B cell (primary cell): ENCODE measurements at regions of chr1 and their contacts with region 1.

Region 1: DNA sequence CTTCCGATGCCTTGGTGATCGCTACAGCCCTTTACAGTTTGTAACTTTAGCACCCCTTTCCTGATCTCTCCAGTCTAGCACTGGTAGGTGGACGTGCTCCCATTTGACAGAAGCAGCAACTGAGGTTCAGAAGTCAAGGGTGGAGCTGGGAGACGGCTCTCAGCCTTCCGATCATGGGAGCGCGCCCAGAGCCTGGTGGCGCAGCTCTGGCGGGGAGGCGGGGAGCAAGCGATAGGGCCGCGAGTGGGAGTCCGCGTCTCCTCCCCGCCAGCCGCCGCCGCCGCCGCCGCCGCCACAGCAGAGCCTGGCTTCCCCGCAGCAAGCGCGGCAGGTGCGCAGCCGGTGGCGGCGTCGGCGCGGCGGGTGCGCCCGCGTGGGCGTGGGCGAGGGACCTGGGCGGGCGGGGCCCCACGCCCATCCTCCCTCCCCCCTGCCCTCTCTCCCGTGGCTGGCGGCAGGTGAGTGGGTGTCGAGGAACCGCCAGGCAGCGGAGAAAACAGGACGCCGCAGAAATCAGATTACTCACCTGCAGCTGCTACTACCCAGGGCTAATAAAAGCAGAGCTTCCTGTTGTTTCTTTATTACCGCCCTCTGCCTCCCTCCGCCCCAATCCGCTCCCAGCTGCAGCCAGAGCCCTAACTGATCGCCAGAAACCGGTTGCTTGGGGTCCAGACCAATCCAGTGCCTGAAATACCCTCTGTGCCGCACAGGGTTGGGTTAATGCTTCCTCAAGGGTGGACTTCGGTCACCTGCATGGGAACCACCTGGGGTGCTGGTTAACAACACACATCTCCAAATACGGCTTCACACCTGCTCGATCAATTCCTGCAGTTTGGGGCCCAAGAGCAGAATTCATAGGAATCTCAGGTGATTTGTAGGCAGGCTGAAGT is 60.2 kb upstream of the ID3 start:
- DNase-seq: peak; percentile 89
- ATAC-seq: peak; percentile 88
- H3K4me3 ChIP-seq: peak overlapping the region in 4 of 5 experiments; percentile 29 to 59 (median 50)
- H3K4me3 Mint-ChIP-seq: peak overlapping the region; percentile 82
- H3K27ac ChIP-seq: peak overlapping the region; percentile 93 to 94
- H3K27ac Mint-ChIP-seq: peak overlapping the region; percentile 98
- H3K4me1 ChIP-seq: peaks cover 77 to 93% of the 10 kb centered on the region in 2 donors
- H3K4me1 Mint-ChIP-seq: peaks cover 87% of the 10 kb centered on the region
- H3K27me3 ChIP-seq: no peaks in the 10 kb centered on the region
- H3K27me3 Mint-ChIP-seq: no peaks in the 10 kb centered on the region
- CTCF ChIP-seq: no peak

Region 2: DNA sequence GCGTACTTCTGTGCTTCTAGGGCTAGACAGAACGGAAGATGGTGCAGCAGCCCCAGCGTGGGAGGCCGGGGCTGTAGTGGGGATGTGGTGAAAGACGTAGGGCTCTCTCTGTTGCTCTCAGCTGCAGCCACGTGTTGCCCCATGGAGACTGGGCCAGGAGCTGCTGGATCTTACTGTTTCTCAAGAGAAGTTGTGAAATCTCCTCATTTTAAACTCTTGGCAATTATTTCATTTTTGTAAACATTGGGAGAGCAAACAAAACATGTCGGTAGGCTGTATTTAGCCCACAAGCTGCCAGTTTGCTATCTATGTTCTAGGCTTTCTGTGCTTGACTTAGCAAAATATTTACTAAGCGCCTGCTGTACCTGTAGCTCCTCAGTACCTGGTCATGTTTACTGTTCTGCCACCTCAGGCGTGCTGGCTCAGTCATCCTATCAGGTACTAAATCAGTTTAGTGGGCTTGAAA is 107.9 kb after region 1 on chr1:
- CTCF ChIA-PET with region 1: no interaction called
- POLR2A ChIA-PET with region 1: interaction called, 6 read pairs
- intact Hi-C with region 1: loop called (anchors 10 kb)
- DNase-seq: no peak
- ATAC-seq: no peak
- H3K4me3 ChIP-seq: peak overlapping the region in 1 of 5 experiments; percentile 0
- H3K4me3 Mint-ChIP-seq: peak overlapping the region; percentile 70
- H3K27ac ChIP-seq: peak overlapping the region; percentile 82 to 87
- H3K27ac Mint-ChIP-seq: peak overlapping the region; percentile 95
- H3K4me1 ChIP-seq: peaks cover 50 to 66% of the 10 kb centered on the region in 2 donors
- H3K4me1 Mint-ChIP-seq: peaks cover 56% of the 10 kb centered on the region
- H3K27me3 ChIP-seq: no peaks in the 10 kb centered on the region
- H3K27me3 Mint-ChIP-seq: no peaks in the 10 kb centered on the region
- CTCF ChIP-seq: no peak